GM12878 (cell line): ENCODE measurements at regions of chr2 and their contacts with region 1.

Region 1: GRCh38 chr2:201860636-201861066 is 54.3 kb downstream of the CDK15 start:
- DNase-seq: peak; percentile 43
- ATAC-seq: peak; percentile 95
- H3K4me3 ChIP-seq: no peak overlapping the region
- H3K27ac ChIP-seq: no peak overlapping the region
- H3K4me1 ChIP-seq: no peaks in the 10 kb centered on the region
- H3K27me3 ChIP-seq: peaks cover 0 to 5% of the 10 kb centered on the region in 2 experiments; a peak in 2 of 4 replicates
- CTCF ChIP-seq: peak; percentile 75 to 86 (median 79)
- EP300 ChIP-seq: no peak
- POLR2A ChIP-seq: no peak
- RAD21 ChIP-seq: peak; percentile 95

Region 2: GRCh38 chr2:200901459-200902072 is 959.1 kb before region 1 on chr2:
- CTCF ChIA-PET with region 1: no interaction called
- POLR2A ChIA-PET with region 1: no interaction called
- RAD21 ChIA-PET with region 1: no interaction called
- SMC1A ChIA-PET with region 1: no interaction called
- in situ Hi-C with region 1: no loop called
- intact Hi-C with region 1: no loop called
- DNase-seq: peak; percentile 72
- ATAC-seq: peak; percentile 99
- H3K4me3 ChIP-seq: no peak overlapping the region
- H3K27ac ChIP-seq: no peak overlapping the region
- H3K4me1 ChIP-seq: no peaks in the 10 kb centered on the region
- H3K27me3 ChIP-seq: no peaks in the 10 kb centered on the region
- CTCF ChIP-seq: peak; percentile 71 to 90 (median 87); a peak in 5 of 6 replicates
- EP300 ChIP-seq: no peak
- POLR2A ChIP-seq: no peak
- RAD21 ChIP-seq: peak; percentile 76

Region 3: GRCh38 chr2:201871471-201871870 is 10.8 kb after region 1 on chr2:
- CTCF ChIA-PET with region 1: interaction called, 10 read pairs
- POLR2A ChIA-PET with region 1: interaction called, 3 read pairs
- RAD21 ChIA-PET with region 1: interaction called, 8 read pairs
- SMC1A ChIA-PET with region 1: interaction called, 3 read pairs
- in situ Hi-C with region 1: no loop called
- intact Hi-C with region 1: no loop called
- DNase-seq: no peak
- ATAC-seq: no peak
- H3K4me3 ChIP-seq: no peak overlapping the region
- H3K27ac ChIP-seq: no peak overlapping the region
- H3K4me1 ChIP-seq: no peaks in the 10 kb centered on the region
- H3K27me3 ChIP-seq: no peaks in the 10 kb centered on the region
- CTCF ChIP-seq: no peak
- EP300 ChIP-seq: no peak
- POLR2A ChIP-seq: no peak
- RAD21 ChIP-seq: no peak

Region 4: DNA sequence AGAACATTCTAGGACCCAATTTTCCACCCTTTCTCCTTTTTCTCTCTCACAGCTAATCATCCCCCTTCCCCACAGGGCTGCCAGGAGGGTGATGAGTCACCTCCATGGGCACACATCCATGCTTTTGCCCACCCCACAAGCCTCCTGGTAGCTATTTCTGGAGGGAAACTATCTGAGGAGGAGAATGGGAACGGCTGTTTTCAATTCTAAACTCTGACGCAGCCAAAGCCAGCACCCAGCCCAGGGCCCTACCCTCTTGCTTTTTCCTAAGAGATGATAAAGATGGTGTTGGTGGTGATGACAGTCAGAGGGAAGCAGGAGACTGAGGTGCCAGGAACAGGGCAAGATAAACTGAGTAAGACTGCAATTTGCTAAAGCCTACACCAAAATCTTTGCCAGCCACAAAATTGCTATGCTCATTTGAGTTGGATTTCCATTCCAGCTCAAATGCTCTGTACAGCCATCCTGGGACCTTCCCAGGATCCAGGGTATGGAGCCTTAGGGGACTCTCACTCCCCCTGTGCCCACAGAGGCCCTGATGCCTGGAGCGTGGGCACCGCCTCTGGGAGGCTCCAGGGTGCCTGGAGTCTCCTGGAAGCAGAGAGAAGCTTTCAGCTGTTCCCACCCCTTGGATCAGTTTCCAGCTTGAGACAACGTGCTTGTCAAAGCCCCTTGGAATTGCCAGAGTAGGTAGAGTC is 111.0 kb after region 1 on chr2:
- CTCF ChIA-PET with region 1: interaction called, 19 read pairs
- POLR2A ChIA-PET with region 1: no interaction called
- RAD21 ChIA-PET with region 1: no interaction called
- SMC1A ChIA-PET with region 1: interaction called, 6 read pairs
- in situ Hi-C with region 1: no loop called
- intact Hi-C with region 1: loop called (anchors 5 kb)
- DNase-seq: no peak
- ATAC-seq: no peak
- H3K4me3 ChIP-seq: no peak overlapping the region
- H3K27ac ChIP-seq: no peak overlapping the region
- H3K4me1 ChIP-seq: no peaks in the 10 kb centered on the region
- H3K27me3 ChIP-seq: no peaks in the 10 kb centered on the region
- CTCF ChIP-seq: no peak
- EP300 ChIP-seq: no peak
- POLR2A ChIP-seq: no peak
- RAD21 ChIP-seq: no peak

Region 5: DNA sequence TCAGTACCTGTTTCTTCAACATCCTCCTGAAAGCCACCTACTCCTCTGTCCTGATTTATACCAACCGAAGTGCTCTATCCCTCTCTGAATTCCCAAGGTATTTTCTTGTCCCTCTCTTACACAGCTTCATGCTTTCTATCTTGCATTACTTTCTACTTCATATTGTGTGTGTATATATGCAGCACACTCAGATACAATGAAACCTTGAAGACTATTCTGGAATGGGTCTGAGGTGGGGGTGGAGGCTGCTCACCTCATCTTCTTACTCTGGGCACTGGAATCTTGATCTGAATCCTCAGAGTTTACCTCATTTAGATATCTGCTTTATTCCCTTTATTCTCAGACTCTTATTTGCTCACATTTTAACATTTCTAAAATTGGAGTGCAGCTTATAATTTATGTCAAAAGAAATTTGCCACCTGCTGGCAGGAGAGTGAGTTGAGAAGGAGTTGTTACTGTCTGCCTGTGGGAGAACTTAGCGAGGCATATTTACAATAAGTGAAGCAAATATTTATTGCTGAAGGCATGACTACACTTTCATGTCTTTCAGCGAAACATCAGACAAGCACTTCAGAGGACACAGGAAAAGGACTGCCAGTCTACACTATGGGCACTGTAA is 195.8 kb after region 1 on chr2:
- CTCF ChIA-PET with region 1: interaction called, 32 read pairs
- POLR2A ChIA-PET with region 1: no interaction called
- RAD21 ChIA-PET with region 1: interaction called, 5 read pairs
- SMC1A ChIA-PET with region 1: interaction called, 16 read pairs
- in situ Hi-C with region 1: no loop called
- intact Hi-C with region 1: loop called (anchors 1 kb)
- DNase-seq: no peak
- ATAC-seq: peak; percentile 56; the same call in 2 of the 3 replicates
- H3K4me3 ChIP-seq: no peak overlapping the region
- H3K27ac ChIP-seq: no peak overlapping the region
- H3K4me1 ChIP-seq: no peaks in the 10 kb centered on the region
- H3K27me3 ChIP-seq: no peaks in the 10 kb centered on the region; a peak in 1 of 4 replicates
- CTCF ChIP-seq: peak in 2 of 3 experiments; percentile 23 to 34; a peak in 3 of 6 replicates
- EP300 ChIP-seq: no peak
- POLR2A ChIP-seq: no peak
- RAD21 ChIP-seq: peak; percentile 42; the same call in 1 of the 2 replicates

Region 6: DNA sequence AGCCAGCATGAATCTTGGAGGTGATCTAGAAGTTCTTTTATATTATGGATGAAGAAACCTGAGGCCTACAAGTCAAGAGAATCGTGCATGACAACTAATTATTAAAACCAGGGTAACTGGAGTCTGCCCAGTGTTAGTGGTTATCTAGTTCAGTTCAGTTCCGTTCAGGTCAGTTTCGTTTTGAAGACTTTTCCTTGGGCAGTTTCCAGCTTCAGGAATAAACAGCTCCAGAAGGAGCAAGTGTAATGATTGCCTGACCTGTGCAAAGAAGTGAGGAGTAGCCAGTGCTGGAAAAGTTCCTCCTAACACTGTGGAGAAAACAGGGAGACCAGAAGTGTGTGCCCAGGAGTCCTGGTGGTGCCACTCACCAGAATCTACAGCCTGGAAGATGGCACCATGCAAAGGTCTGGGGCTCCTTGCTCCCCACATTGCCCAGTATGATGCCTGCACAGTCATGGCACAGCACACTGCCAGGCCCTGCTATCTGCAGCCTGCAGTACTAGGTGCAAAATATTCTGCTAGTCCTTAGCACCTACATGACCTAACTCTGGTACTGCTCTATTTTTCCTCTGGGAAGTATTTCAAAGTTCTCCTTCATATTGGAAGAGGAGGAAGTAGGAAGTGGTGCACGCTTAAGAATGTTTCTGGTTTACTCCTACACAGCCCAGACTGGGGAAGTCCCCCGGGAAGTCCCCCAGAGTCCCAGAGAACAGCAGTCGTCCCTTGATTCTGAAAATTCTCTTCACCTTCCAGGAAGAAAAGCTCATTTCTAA is 312.0 kb after region 1 on chr2:
- CTCF ChIA-PET with region 1: interaction called, 81 read pairs
- POLR2A ChIA-PET with region 1: no interaction called
- RAD21 ChIA-PET with region 1: interaction called, 34 read pairs
- SMC1A ChIA-PET with region 1: interaction called, 41 read pairs
- in situ Hi-C with region 1: loop called (anchors 5 kb)
- intact Hi-C with region 1: no loop called
- DNase-seq: peak; percentile 39
- ATAC-seq: peak; percentile 89
- H3K4me3 ChIP-seq: no peak overlapping the region
- H3K27ac ChIP-seq: peak overlapping the region; percentile 58
- H3K4me1 ChIP-seq: peaks cover 14% of the 10 kb centered on the region
- H3K27me3 ChIP-seq: no peaks in the 10 kb centered on the region
- CTCF ChIP-seq: no peak
- EP300 ChIP-seq: no peak
- POLR2A ChIP-seq: no peak
- RAD21 ChIP-seq: no peak